ENCODE measurements at regions of chr7 and their contacts with region 1.

Region 1: GRCh38 chr7:83271212-83272099 is 108.8 kb upstream of the PCLO start:
- DNase-seq: no peak
- ATAC-seq: peak; percentile 57 to 61

Region 2: DNA sequence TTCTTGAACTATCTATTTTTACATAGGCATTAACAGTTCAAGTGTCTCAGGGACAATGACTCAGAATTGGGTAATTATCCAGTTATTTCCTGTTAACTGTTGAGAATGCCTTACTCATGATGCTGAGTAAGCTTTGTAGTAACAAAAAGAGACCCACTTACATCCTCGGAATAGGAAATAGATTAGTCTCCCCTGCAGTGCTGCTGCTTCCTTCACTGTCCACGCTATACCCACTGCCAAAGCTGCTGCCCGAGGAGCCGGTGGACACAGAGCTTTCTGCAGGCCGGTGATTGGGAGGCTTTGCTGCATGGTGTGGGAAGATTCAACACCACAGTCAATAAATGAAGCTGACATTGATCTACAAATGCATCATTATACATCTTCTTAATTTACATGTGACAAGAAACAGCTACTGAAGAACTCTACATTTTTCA is 465.9 kb before region 1 on chr7:
- intact Hi-C with region 1: loop called (anchors 2 to 5 kb)
- DNase-seq: no peak
- ATAC-seq: peak in 1 of 2 donors; percentile 36

Region 3: GRCh38 chr7:82810558-82811259 is 460.7 kb before region 1 on chr7:
- intact Hi-C with region 1: loop called (anchors 2 to 5 kb)
- DNase-seq: no peak
- ATAC-seq: peak in 1 of 2 donors; percentile 46

Region 4: DNA sequence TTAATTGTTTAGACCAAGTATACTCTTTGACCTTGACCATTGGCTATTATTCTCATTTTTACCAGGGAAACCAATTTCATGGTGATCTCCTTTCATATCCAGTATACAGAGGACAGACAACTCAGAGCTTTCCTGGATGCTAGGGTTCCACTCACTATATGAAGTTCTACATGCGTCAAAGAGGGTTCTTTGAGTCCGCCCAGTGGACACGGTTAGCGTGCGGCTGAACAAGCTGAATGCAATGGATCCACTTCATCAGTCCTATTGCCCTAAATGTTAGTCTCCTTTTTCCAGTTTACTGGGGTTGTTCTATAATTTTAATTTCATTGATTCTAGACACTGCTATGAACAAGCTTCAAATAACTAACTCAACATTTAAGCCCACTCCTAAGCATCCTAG is 53.6 kb after region 1 on chr7:
- intact Hi-C with region 1: no loop called
- DNase-seq: no peak
- ATAC-seq: no peak